Breast epithelium (tissue), 4 donors: ENCODE measurements at regions of chr3 and their contacts with region 1.

Region 1: DNA sequence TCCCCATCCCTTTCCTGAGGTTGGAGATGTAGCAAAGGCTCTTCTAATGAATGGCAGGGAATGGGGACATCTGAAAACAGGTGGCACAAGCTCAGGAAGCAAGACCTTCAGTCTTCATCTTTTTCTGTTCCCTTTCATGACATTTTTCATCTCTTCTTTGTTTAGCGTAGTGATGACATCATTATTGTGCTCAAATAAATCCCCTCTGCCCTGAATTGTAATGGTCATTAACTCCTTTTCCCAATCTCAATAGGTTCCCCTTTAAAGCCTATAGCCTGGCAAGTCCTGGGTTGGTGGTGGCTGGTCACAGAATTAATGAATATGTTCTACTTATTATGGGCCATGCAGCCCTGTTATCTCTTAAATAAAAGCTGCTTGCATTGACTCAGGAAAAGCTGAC is 21.4 kb downstream of the TF start:
- DNase-seq: no peak
- H3K4me3 ChIP-seq: no peak overlapping the region
- H3K27ac ChIP-seq: no peak overlapping the region
- H3K4me1 ChIP-seq: no peaks in the 10 kb centered on the region
- H3K27me3 ChIP-seq: no peaks in the 10 kb centered on the region
- CTCF ChIP-seq: no peak
- POLR2A ChIP-seq: no peak

Region 2: DNA sequence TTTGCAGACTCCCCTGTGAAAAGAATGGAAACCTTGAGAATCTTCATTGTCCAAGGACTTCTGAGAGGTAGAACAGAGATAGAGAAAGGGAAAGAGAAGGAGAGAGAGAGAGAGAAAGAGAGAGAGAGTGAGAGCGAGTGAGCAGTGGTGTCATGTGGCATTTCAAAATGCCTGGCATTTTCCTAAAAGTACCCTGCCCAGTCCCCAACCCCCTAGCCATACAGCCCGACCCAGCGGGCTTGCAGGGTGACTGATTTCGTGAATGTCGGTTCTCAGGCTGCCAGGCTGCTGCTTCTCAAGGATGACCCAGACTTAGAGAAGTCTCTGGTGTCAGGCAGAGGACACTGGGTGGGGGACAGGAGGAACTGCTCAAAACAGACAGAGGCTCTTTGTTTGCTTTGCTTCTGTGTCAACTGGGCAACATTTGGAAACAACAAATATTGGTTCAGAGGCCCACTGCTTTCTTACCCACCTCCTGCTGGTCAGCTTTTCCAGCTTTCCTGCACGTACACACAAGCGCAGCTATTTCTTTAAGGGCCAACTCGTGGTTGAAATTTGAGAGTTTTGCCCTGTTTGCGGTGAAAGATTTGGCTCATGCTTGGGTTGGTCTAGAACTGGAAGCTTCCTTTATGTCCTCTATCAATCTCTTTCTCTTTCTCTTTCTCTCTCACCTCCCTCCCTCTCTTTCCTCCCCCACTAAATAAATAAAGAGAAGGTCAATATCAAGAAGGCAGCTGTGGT is 25.1 kb before region 1 on chr3:
- intact Hi-C with region 1: loop called (anchors 1 kb)
- DNase-seq: no peak
- H3K4me3 ChIP-seq: peak overlapping the region in 1 of 3 donors; percentile 21
- H3K27ac ChIP-seq: peak overlapping the region in 1 of 2 donors; percentile 61
- H3K4me1 ChIP-seq: no peaks in the 10 kb centered on the region
- H3K27me3 ChIP-seq: peaks cover 0 to 10% of the 10 kb centered on the region in 2 donors
- CTCF ChIP-seq: no peak
- POLR2A ChIP-seq: no peak